Right ventricle myocardium superior (tissue), 1 donor: ENCODE measurements at regions of chr3 and their contacts with region 1.

Region 1: GRCh38 chr3:48877671-48878070 is 21.0 kb downstream of the SLC25A20 start:
- DNase-seq: no peak
- ATAC-seq: no peak

Region 2: DNA sequence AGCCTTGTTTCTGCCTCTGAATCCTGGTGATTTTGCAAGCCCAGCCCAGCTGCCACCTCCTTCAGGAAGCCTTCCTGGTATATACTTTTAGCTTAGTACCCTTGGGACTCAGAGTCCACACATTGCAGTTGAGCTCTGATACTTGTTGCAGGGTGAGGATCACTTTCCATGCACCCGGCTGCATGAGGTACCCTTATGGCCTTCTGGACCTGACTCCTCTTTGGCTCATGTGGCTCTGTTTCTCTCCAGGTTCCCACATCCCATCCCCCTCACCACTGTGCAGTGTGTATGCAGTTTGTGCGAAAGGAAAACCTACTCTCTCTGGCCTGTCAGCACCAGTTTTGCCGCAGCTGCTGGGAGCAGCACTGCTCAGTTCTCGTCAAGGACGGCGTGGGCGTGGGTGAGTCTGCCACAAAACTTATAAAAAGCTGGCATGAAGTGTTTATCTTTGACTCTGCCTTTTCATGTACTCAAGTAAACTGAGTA is 89.2 kb after region 1 on chr3:
- intact Hi-C with region 1: loop called (anchors 10 kb)
- DNase-seq: no peak
- ATAC-seq: peak; percentile 27